Common myeloid progenitor, CD34-positive (primary cell): ENCODE measurements at regions of chr5 and their contacts with region 1.

Region 1: DNA sequence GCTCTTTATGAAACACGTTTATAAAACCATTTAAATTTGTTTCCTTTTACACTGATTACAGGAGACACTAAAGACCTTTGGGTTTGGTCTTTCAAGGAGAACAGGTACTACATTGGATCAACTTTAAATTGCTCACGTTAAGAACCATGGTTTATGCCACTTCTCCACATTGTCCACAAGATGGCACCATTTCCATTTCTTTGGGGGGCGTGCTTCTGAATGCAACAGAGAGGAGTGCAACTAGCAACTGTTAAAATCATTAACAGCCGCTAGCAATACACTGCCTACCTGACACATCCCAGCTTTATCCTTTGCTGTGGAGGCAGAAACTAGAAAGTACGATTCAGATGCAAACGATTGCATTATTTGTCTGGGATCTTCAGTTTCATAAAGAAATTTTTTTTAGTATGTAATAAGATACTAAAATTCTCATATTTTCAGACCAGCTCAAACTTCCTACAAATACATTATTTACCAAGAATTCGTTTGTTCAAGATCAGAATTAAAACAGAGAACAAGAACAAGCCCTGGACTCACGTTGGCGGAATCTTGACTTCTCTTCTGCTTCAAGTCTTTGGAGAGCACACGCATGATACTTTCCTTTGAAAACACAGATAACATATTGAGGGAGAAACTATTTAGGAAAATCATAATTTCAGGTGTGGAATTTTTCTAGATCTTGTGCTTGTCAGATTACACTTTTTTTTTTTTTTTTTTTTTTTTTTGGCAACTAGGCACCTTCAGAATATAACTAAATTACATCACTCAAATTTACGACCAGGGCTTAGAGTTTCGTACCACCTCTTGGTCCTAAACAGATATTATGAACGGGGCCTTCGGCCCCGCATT is 702 bp downstream of the CDC20B start:
- DNase-seq: peak; percentile 85 to 91 (median 90)
- H3K4me3 ChIP-seq: peak overlapping the region in 5 of 7 experiments; percentile 50 to 76 (median 63)
- H3K27ac ChIP-seq: no peak overlapping the region
- H3K4me1 ChIP-seq: peaks cover 10 to 33% (median 24%) of the 10 kb centered on the region in 4 experiments
- H3K27me3 ChIP-seq: peaks cover 22 to 86% (median 34%) of the 10 kb centered on the region in 5 experiments

Region 2: GRCh38 chr5:55004729-55005128 is 167.5 kb before region 1 on chr5:
- CTCF ChIA-PET with region 1: no interaction called
- POLR2A ChIA-PET with region 1: no interaction called
- DNase-seq: no peak
- H3K4me3 ChIP-seq: no peak overlapping the region
- H3K27ac ChIP-seq: no peak overlapping the region
- H3K4me1 ChIP-seq: no peaks in the 10 kb centered on the region
- H3K27me3 ChIP-seq: peaks cover 0 to 1% (median 0%) of the 10 kb centered on the region in 5 experiments

Region 3: GRCh38 chr5:55159763-55160492 is 12.3 kb before region 1 on chr5 and contains the start of gene GPX8:
- CTCF ChIA-PET with region 1: interaction called, 16 read pairs
- POLR2A ChIA-PET with region 1: no interaction called
- DNase-seq: peak; percentile 44 to 71 (median 64)
- H3K4me3 ChIP-seq: peak within 1 kb of the TSS in 1 of 7 experiments; percentile 49
- H3K27ac ChIP-seq: no peak within 1 kb of the TSS
- H3K4me1 ChIP-seq: peaks cover 0 to 5% (median 1%) of the 10 kb centered on the region in 4 experiments
- H3K27me3 ChIP-seq: peaks cover 0 to 17% (median 8%) of the 10 kb centered on the region in 5 experiments

Region 4: DNA sequence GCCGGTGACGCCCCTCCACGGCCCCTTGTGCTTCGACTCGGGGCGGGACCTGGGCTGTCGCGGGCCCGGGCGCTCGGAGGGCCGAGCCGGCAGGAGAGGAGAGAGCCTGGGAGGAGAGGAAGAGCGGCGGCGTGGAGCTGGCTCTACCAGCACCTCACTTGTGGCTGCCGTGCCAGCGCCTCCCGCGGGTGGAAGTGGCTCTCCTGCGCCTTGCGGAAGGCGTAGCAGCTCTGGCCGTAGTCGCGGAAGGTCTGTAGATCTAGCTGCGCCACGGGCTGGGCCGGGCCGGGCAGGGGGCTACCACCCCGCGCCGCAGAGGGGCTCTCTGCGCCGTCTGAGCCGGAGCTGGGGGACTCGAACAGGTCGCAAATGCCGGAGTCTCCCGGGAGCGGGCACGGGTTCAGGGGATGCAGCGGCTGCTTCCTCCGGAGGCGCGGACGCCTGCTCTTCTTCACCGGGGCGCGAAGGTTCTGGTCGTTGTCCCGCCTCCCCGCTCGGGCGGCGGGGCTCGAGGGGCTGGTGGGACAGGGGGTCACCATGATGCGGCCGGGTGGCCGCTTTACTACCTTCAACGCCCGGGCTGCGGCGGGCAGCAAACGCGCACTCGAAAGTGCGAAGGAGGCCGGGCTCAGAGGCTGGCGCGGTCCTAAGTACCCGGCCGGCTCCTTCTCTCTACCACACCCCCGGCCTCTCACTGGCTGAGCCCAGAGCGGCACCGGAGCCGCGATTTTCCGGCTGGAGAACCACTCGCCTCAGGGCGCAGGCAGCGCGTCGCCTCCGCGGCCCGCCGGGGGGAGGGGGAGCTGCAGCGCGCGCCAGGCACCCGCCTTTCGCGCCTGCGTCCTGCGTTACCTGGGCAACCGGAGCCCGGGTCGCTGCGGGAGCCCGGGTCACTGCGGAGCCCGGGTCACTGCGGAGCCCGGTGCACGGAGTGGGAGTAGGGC is 61.0 kb after region 1 on chr5 and contains the start of gene CCNO:
- CTCF ChIA-PET with region 1: interaction called, 27 read pairs
- POLR2A ChIA-PET with region 1: interaction called, 3 read pairs
- DNase-seq: peak in 2 of 3 donors; percentile 64 to 77
- H3K4me3 ChIP-seq: peak within 1 kb of the TSS in 6 of 7 experiments; percentile 30 to 74 (median 66)
- H3K27ac ChIP-seq: no peak within 1 kb of the TSS
- H3K4me1 ChIP-seq: peaks cover 3 to 38% (median 35%) of the 10 kb centered on the region in 4 experiments
- H3K27me3 ChIP-seq: peaks cover 32 to 96% (median 58%) of the 10 kb centered on the region in 5 experiments

Region 5: GRCh38 chr5:55356896-55357295 is 184.6 kb after region 1 on chr5:
- CTCF ChIA-PET with region 1: no interaction called
- POLR2A ChIA-PET with region 1: no interaction called
- DNase-seq: no peak
- H3K4me3 ChIP-seq: no peak overlapping the region
- H3K27ac ChIP-seq: no peak overlapping the region
- H3K4me1 ChIP-seq: no peaks in the 10 kb centered on the region
- H3K27me3 ChIP-seq: no peaks in the 10 kb centered on the region